ENCODE measurements at regions of chr18 and their contacts with region 1.

Region 1: GRCh38 chr18:61502472-61502871 is 169.2 kb downstream of the CDH20 start:
- DNase-seq: no peak
- H3K4me3 Mint-ChIP-seq: no peak overlapping the region
- H3K27ac Mint-ChIP-seq: no peak overlapping the region
- H3K4me1 Mint-ChIP-seq: no peaks in the 10 kb centered on the region
- H3K27me3 Mint-ChIP-seq: peaks cover 8% of the 10 kb centered on the region

Region 2: DNA sequence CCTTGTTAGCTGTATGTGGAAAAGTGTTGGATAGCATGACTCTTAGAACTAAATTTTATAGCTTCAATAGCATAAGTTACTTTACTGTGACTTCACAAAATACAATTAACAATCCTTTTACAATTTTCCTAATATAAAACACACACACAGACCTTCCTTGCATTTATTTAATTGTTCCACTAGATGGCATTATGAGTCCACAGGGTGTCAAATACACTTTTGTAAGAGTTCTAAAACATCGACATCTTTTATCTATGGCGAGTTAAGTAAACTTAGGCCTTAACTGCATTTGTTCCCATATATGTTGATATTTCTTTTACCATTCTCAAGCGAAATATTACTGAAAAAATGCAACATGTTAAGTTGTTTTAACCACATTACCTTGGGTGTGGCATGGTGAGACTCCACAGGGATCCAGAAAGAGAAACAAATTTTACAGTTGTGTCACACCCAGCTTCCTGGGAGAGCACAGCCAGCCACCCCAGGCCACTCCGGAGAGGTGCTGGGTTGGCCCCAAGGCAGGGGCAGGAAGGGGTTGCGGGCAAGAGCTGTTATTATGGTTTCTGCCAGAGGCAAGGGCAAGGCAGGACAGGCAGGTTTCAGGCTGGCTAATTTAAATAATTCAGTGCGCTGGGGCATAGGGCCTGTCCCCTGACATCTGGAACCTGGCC is 817.5 kb before region 1 on chr18:
- intact Hi-C with region 1: loop called (anchors 10 kb)
- DNase-seq: no peak
- H3K4me3 Mint-ChIP-seq: no peak overlapping the region
- H3K27ac Mint-ChIP-seq: no peak overlapping the region
- H3K4me1 Mint-ChIP-seq: no peaks in the 10 kb centered on the region
- H3K27me3 Mint-ChIP-seq: no peaks in the 10 kb centered on the region

Region 3: GRCh38 chr18:61322265-61322873 is 180.1 kb before region 1 on chr18:
- intact Hi-C with region 1: loop called (anchors 1 kb)
- DNase-seq: peak; percentile 16
- H3K4me3 Mint-ChIP-seq: no peak overlapping the region
- H3K27ac Mint-ChIP-seq: no peak overlapping the region
- H3K4me1 Mint-ChIP-seq: no peaks in the 10 kb centered on the region
- H3K27me3 Mint-ChIP-seq: no peaks in the 10 kb centered on the region